ENCODE measurements at regions of chr9 and their contacts with region 1.

Region 1: DNA sequence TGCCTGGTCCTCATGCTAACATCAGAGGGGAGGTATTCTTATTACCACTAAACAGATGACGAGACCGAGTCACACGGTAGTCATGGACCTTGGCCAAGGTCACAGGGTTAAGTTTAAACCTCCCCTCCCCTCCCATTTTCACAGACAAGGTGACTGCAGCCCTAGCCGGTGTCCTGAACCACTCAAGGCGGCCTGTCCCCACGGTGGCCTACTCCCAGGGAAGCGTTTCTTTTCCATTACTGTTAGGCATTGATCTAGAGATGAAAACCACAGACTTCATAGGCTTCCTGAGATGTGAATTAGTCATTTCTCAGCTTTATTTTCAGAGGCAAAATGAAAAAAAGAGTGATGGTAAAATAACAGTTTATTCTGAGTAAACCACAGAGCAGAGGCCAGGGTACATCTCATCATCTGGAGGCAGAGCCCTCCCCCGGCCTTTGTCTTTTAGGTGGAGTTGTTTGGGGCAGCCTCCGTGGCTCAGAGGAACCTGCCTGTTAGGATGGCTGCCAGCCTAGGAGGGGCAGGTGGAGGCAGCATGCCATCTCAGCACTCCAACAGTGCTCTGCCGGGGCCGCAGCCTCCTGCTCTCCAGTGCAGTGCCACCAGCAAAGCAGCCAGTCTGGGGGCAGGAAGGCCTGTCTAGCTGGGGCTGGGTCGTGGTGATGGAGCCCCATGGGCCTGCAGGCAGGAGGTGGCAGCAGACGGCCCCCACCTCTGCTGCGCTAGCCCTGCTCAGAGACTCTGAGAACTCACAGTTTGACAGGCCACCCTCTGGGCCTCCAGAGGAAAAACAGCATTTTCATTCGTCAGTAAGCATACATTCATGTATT is 71.2 kb downstream of the RAPGEF1 start:
- DNase-seq: peak; percentile 53
- ATAC-seq: peak; percentile 78
- H3K4me3 ChIP-seq: no peak overlapping the region
- H3K27ac ChIP-seq: peak overlapping the region; percentile 45
- H3K4me1 ChIP-seq: peaks cover 33% of the 10 kb centered on the region
- H3K27me3 ChIP-seq: no peaks in the 10 kb centered on the region
- CTCF ChIP-seq: no peak

Region 2: GRCh38 chr9:131598121-131598520 is 70.5 kb before region 1 on chr9:
- CTCF ChIA-PET with region 1: interaction called, 10 read pairs
- POLR2A ChIA-PET with region 1: no interaction called
- intact Hi-C with region 1: no loop called
- DNase-seq: no peak
- ATAC-seq: no peak
- H3K4me3 ChIP-seq: no peak overlapping the region
- H3K27ac ChIP-seq: no peak overlapping the region
- H3K4me1 ChIP-seq: no peaks in the 10 kb centered on the region
- H3K27me3 ChIP-seq: no peaks in the 10 kb centered on the region
- CTCF ChIP-seq: no peak

Region 3: GRCh38 chr9:131739980-131740648 is 71.5 kb after region 1 on chr9 and contains the start of gene RAPGEF1:
- CTCF ChIA-PET with region 1: no interaction called
- POLR2A ChIA-PET with region 1: no interaction called
- intact Hi-C with region 1: loop called (anchors 2 kb)
- DNase-seq: peak; percentile 43
- ATAC-seq: peak; percentile 60
- H3K4me3 ChIP-seq: peak within 1 kb of the TSS; percentile 87
- H3K27ac ChIP-seq: peak within 1 kb of the TSS; percentile 20; the same call in 1 of the 2 replicates
- H3K4me1 ChIP-seq: peaks cover 24% of the 10 kb centered on the region
- H3K27me3 ChIP-seq: no peaks in the 10 kb centered on the region
- CTCF ChIP-seq: peak; percentile 67
- total RNA-seq, gene RAPGEF1: 25.2 and 38.0 TPM in 2 replicates